ENCODE measurements at regions of chr17 and their contacts with region 1.

Region 1: DNA sequence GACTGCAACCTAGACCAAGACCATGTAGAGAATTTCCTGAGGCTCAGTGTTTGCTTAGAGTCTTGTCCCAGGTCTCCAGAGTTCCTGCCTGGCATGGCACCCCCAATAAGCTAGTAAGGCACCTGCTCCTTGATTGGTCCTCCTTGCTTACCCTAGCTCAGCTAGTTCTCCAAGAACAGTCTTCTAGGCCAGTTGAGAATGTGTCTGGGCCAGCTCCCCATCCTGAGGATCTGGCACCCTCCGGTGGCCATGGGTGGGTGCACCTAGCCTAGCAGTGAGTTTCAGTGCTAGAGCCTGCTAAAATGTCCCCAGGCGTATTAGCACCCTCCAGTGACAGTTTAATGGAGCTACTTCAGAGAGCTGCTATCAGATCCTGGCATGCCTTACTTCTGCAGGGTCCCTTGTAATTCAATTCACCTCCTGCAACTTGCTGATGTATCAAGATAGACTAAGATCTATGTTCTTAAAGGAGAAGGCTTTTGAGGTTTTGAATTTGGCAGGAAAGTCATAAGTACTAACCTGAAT is 44.4 kb upstream of the MED13 start:
- DNase-seq: peak; percentile 91
- H3K4me3 ChIP-seq: no peak overlapping the region
- H3K4me3 Mint-ChIP-seq: no peak overlapping the region
- H3K27ac Mint-ChIP-seq: no peak overlapping the region
- H3K4me1 ChIP-seq: peaks cover 16% of the 10 kb centered on the region
- H3K4me1 Mint-ChIP-seq: peaks cover 9% of the 10 kb centered on the region
- H3K27me3 ChIP-seq: no peaks in the 10 kb centered on the region
- H3K27me3 Mint-ChIP-seq: no peaks in the 10 kb centered on the region
- CTCF ChIP-seq: peak; percentile 90 to 99

Region 2: GRCh38 chr17:61862975-61863800 is 246.3 kb before region 1 on chr17 and contains the start of gene BRIP1:
- CTCF ChIA-PET with region 1: interaction called, 30 read pairs
- POLR2A ChIA-PET with region 1: no interaction called
- intact Hi-C with region 1: loop called (anchors 1 kb)
- DNase-seq: peak; percentile 95 to 97
- H3K4me3 ChIP-seq: peak within 1 kb of the TSS; percentile 76
- H3K4me3 Mint-ChIP-seq: peak within 1 kb of the TSS; percentile 97
- H3K27ac Mint-ChIP-seq: peak within 1 kb of the TSS; percentile 97
- H3K4me1 ChIP-seq: peaks cover 20% of the 10 kb centered on the region
- H3K4me1 Mint-ChIP-seq: peaks cover 11% of the 10 kb centered on the region
- H3K27me3 ChIP-seq: no peaks in the 10 kb centered on the region
- H3K27me3 Mint-ChIP-seq: no peaks in the 10 kb centered on the region
- CTCF ChIP-seq: no peak
- total RNA-seq, gene BRIP1: 17.3 and 18.3 TPM in 2 replicates

Region 3: DNA sequence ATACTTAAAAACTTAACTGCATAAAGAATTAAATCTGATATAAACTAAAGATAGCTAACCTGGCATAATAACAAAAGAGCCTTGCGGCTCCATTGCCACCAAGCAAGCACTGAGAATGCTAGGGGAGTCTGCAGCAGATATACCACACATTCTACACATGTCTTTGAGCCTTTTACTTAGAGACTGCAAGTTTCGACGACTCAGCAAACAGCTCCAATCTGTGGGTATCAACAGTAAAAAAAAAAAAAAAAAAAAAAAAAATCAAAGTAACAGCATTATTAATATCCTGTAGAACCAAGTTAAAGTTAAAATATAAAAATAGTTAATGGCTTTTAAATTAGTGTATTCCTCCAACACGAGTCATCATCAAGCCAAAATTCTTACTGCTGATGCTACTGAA is 153.8 kb before region 1 on chr17:
- CTCF ChIA-PET with region 1: no interaction called
- POLR2A ChIA-PET with region 1: no interaction called
- intact Hi-C with region 1: no loop called
- DNase-seq: no peak
- H3K4me3 ChIP-seq: no peak overlapping the region
- H3K4me3 Mint-ChIP-seq: no peak overlapping the region
- H3K27ac Mint-ChIP-seq: no peak overlapping the region
- H3K4me1 ChIP-seq: no peaks in the 10 kb centered on the region
- H3K4me1 Mint-ChIP-seq: no peaks in the 10 kb centered on the region
- H3K27me3 ChIP-seq: no peaks in the 10 kb centered on the region
- H3K27me3 Mint-ChIP-seq: no peaks in the 10 kb centered on the region
- CTCF ChIP-seq: no peak

Region 4: GRCh38 chr17:62065598-62066468 is 43.6 kb before region 1 on chr17:
- CTCF ChIA-PET with region 1: interaction called, 64 read pairs
- POLR2A ChIA-PET with region 1: interaction called, 12 read pairs
- intact Hi-C with region 1: loop called (anchors 1 kb)
- DNase-seq: peak; percentile 99
- H3K4me3 ChIP-seq: peak overlapping the region; percentile 75
- H3K4me3 Mint-ChIP-seq: peak overlapping the region; percentile 91
- H3K27ac Mint-ChIP-seq: peak overlapping the region; percentile 98
- H3K4me1 ChIP-seq: peaks cover 16% of the 10 kb centered on the region
- H3K4me1 Mint-ChIP-seq: peaks cover 26% of the 10 kb centered on the region
- H3K27me3 ChIP-seq: no peaks in the 10 kb centered on the region
- H3K27me3 Mint-ChIP-seq: no peaks in the 10 kb centered on the region
- CTCF ChIP-seq: peak; percentile 93

Region 5: GRCh38 chr17:62121025-62121730 is 11.7 kb after region 1 on chr17:
- CTCF ChIA-PET with region 1: interaction called, 12 read pairs
- POLR2A ChIA-PET with region 1: interaction called, 3 read pairs
- intact Hi-C with region 1: no loop called
- DNase-seq: peak; percentile 58 to 63
- H3K4me3 ChIP-seq: no peak overlapping the region
- H3K4me3 Mint-ChIP-seq: peak overlapping the region; percentile 22
- H3K27ac Mint-ChIP-seq: peak overlapping the region; percentile 83
- H3K4me1 ChIP-seq: peaks cover 22% of the 10 kb centered on the region
- H3K4me1 Mint-ChIP-seq: peaks cover 42% of the 10 kb centered on the region
- H3K27me3 ChIP-seq: no peaks in the 10 kb centered on the region
- H3K27me3 Mint-ChIP-seq: no peaks in the 10 kb centered on the region
- CTCF ChIP-seq: no peak

Region 6: DNA sequence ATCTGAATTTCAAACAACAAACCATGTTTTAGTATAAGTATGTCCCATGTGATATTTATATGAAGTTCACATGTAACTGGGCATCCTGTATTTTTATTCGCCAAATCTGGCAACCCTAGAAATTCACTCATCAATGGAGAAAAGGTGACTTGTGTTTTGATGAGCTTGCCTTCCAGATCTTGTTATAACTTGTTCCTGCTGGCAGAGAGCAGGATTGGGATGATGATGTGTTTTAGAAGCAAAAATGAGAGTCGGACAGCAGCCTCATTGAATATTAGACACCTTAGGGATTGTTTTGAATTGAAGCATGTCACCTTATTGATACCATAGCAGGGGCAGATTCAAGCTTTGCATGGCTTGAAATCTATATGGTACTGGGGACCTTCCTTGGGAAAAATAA is 41.0 kb after region 1 on chr17:
- CTCF ChIA-PET with region 1: no interaction called
- POLR2A ChIA-PET with region 1: no interaction called
- intact Hi-C with region 1: no loop called
- DNase-seq: no peak
- H3K4me3 ChIP-seq: no peak overlapping the region
- H3K4me3 Mint-ChIP-seq: no peak overlapping the region
- H3K27ac Mint-ChIP-seq: peak overlapping the region; percentile 55
- H3K4me1 ChIP-seq: peaks cover 23% of the 10 kb centered on the region
- H3K4me1 Mint-ChIP-seq: peaks cover 37% of the 10 kb centered on the region
- H3K27me3 ChIP-seq: no peaks in the 10 kb centered on the region
- H3K27me3 Mint-ChIP-seq: no peaks in the 10 kb centered on the region
- CTCF ChIP-seq: no peak

Measured in Caco-2 (cell line).